ENCODE measurements at regions of chr1 and their contacts with region 1.

Region 1: GRCh38 chr1:46527474-46528296 is 23.8 kb downstream of the KNCN start:
- DNase-seq: peak; percentile 87 to 94 (median 89)
- ATAC-seq: peak; percentile 87
- H3K4me3 ChIP-seq: no peak overlapping the region
- H3K27ac ChIP-seq: no peak overlapping the region; the same call in 2 of the 3 replicates
- H3K4me1 ChIP-seq: peaks cover 47 to 50% of the 10 kb centered on the region in 2 experiments
- H3K27me3 ChIP-seq: no peaks in the 10 kb centered on the region
- CTCF ChIP-seq: peak; percentile 98 to 99 (median 99)
- EP300 ChIP-seq: peak; percentile 50; the same call in 1 of the 2 replicates
- POLR2A ChIP-seq: no peak
- RAD21 ChIP-seq: peak; percentile 100

Region 2: GRCh38 chr1:46333300-46334029 is 194.2 kb before region 1 on chr1:
- CTCF ChIA-PET with region 1: interaction called, 8 read pairs
- POLR2A ChIA-PET with region 1: no interaction called
- in situ Hi-C with region 1: no loop called
- intact Hi-C with region 1: loop called (anchors 2 kb)
- DNase-seq: peak in 2 of 4 experiments; percentile 71 to 77
- ATAC-seq: peak; percentile 98
- H3K4me3 ChIP-seq: no peak overlapping the region
- H3K27ac ChIP-seq: no peak overlapping the region
- H3K4me1 ChIP-seq: peaks cover 2 to 5% of the 10 kb centered on the region in 2 experiments; a peak in 4 of 5 replicates
- H3K27me3 ChIP-seq: no peaks in the 10 kb centered on the region
- CTCF ChIP-seq: peak; percentile 67 to 96 (median 80)
- EP300 ChIP-seq: no peak
- POLR2A ChIP-seq: no peak
- RAD21 ChIP-seq: peak; percentile 73 to 86

Region 3: DNA sequence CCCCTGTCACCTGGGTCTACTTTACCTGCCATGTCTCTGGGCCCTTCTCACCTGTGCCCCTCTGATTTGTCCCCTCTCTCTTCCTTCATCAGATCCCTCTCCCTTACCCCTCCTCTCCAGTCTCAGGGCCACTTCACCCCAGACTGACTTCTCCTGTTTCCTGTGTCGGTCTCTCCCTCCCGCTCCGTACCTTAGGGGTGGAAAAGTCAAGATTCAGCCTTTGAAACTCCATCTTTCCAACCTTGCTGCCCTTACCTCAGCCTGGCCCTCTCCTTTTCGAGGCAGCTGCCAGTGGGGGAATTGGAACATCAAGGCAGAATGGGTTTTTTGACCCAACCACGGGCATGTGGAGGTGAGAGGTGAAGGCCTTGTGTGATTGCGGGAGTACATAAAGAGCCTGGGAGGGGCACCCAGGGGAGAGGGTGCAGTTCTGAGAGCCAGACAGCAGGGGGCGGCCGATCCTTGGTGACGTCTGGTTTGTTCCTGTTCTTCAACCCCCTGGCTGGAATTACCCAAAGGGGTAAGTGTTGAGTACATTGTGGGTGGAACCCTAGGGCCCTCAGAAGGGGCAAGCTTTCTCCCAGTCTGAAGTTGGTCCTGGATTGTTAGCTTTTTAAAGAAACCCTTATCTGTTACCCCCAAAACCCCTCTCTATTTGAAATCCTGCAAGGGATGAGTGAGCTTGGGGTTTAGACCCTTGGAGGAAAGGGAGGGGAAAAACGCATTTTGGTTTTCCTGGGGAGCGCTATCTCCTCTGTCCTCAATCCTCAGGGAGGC is 50.3 kb before region 1 on chr1:
- CTCF ChIA-PET with region 1: interaction called, 137 read pairs
- POLR2A ChIA-PET with region 1: interaction called, 7 read pairs
- in situ Hi-C with region 1: loop called (anchors 5 kb)
- intact Hi-C with region 1: loop called (anchors 1 kb)
- DNase-seq: peak; percentile 92 to 94 (median 93)
- ATAC-seq: peak; percentile 89
- H3K4me3 ChIP-seq: no peak overlapping the region
- H3K27ac ChIP-seq: no peak overlapping the region
- H3K4me1 ChIP-seq: peaks cover 19 to 27% of the 10 kb centered on the region in 2 experiments
- H3K27me3 ChIP-seq: no peaks in the 10 kb centered on the region
- CTCF ChIP-seq: peak; percentile 97 to 99 (median 99)
- EP300 ChIP-seq: peak; percentile 37; the same call in 1 of the 2 replicates
- POLR2A ChIP-seq: no peak
- RAD21 ChIP-seq: peak; percentile 99 to 100

Region 4: DNA sequence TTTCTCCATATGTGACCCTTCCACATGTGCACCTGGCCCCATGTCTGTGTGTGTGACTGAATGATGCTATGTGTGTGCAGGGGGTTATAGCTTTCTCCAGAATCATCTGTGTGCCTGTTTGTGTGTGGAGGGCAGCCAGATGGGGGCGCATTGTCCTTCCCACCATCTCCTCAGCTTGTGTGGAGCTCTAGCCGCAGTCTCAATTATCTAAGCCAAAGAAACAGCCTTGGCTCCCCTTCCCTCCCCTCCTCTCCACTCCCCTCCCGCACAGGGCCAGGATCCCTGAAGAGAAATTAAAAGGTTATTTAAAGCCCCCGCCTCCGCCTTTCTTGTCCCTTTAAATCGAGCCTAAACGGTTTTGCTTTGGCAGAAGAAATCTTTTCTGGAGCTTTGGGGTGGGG is 39.9 kb before region 1 on chr1:
- CTCF ChIA-PET with region 1: interaction called, 13 read pairs
- POLR2A ChIA-PET with region 1: interaction called, 7 read pairs
- in situ Hi-C with region 1: no loop called
- intact Hi-C with region 1: loop called (anchors 1 kb)
- DNase-seq: peak; percentile 64 to 86 (median 76)
- ATAC-seq: peak; percentile 79
- H3K4me3 ChIP-seq: no peak overlapping the region
- H3K27ac ChIP-seq: no peak overlapping the region
- H3K4me1 ChIP-seq: peaks cover 10 to 75% of the 10 kb centered on the region in 2 experiments
- H3K27me3 ChIP-seq: no peaks in the 10 kb centered on the region
- CTCF ChIP-seq: peak; percentile 78 to 87 (median 80)
- EP300 ChIP-seq: peak; percentile 19; the same call in 1 of the 2 replicates
- POLR2A ChIP-seq: no peak
- RAD21 ChIP-seq: peak; percentile 56 to 81